Activated T-helper 1 cell treated with anti-CD3 and anti-CD28 coated beads, Interleukin-12 subunit alpha, Interleukin-12 subunit beta, Interleukin-2, Interleukin-4 antibody, amounts not matched to agents 30 ng/mL and 10 ng/mL and 1 ng/mL, durations not matched to agents 14 hours and 24 hours and 36 hours (primary cell): ENCODE measurements at regions of chr10 and their contacts with region 1.

Region 1: DNA sequence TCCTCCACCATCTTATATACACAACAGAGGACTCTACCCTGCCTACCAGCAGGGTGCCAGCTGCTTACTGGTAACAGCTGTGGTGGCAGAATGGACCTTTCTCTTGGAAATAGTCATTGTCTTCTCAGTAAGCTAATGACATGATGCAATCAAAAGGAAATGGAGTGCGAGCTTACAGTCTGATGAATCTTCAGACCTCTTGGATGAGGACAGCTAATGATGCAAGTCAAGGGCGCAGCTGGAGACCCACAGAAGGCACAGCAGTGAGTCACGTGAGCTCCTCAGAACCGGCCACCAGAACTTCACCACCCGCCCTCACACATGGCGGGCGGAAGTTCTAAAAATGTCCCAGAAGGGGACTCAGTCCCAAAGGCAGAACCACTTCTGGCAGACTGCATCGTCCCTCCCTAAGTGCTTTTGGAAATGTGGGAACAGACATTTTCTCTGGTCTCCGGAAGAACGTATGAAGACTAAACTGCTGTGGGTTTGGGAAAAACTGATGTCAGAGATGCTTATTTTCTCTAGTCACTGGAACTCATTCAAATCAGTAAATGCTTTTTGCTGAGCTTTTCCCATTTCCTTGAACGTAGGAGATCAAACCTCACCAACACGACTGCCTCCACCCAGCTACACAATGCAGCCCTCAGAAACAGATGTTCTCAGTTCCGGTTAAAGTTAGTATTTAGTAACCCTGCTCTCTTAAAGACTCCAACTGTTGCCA is 96.4 kb downstream of the FAS start:
- DNase-seq: no peak
- H3K4me3 Mint-ChIP-seq: no peak overlapping the region
- H3K27ac Mint-ChIP-seq: no peak overlapping the region
- H3K4me1 Mint-ChIP-seq: peaks cover 9% of the 10 kb centered on the region
- H3K27me3 Mint-ChIP-seq: peaks cover 15% of the 10 kb centered on the region

Region 2: DNA sequence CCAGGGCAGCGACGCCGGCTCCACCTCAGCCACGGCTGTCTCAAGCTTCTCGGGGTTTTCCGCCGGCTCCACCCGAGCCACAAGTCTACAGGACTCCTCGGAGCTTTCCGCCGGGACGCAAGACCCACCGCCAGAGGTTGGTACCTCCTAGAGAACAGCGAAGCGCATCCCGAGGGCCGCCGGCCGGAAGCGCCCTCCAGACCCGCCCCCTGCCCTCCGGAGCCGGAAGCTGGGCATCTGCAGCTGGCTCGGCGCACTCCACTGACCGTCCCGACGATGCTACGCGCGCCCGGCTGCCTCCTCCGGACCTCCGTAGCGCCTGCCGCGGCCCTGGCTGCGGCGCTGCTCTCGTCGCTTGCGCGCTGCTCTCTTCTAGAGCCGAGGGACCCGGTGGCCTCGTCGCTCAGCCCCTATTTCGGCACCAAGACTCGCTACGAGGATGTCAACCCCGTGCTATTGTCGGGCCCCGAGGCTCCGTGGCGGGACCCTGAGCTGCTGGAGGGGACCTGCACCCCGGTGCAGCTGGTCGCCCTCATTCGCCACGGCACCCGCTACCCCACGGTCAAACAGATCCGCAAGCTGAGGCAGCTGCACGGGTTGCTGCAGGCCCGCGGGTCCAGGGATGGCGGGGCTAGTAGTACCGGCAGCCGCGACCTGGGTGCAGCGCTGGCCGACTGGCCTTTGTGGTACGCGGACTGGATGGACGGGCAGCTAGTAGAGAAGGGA is 1582.2 kb before region 1 on chr10 and contains the start of gene MINPP1:
- intact Hi-C with region 1: loop called (anchors 10 kb)
- DNase-seq: peak; percentile 68
- H3K4me3 Mint-ChIP-seq: peak within 1 kb of the TSS; percentile 90
- H3K27ac Mint-ChIP-seq: peak within 1 kb of the TSS; percentile 86
- H3K4me1 Mint-ChIP-seq: peaks cover 41% of the 10 kb centered on the region
- H3K27me3 Mint-ChIP-seq: peaks cover 14% of the 10 kb centered on the region
- total RNA-seq, gene MINPP1: 12.3 and 13.8 TPM in 2 replicates

Region 3: DNA sequence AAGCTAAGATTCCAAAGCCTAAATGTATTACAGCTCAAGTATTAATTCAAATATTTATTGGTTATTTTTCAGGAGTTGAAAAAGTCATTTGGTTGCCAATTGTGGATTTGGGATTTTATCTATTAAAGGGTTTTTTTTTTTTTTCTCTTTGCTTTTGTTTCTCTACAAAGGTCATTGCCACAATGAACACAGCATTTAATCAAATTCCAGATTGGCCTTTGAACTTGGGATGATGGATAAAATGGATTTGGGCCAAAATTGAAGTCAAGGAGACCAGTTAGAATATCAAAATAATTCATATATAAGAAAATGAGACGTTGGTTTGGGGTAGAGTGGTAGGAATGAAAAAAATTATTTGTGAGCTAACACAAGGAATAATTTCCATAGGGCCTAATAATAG is 317.6 kb before region 1 on chr10:
- intact Hi-C with region 1: no loop called
- DNase-seq: no peak
- H3K4me3 Mint-ChIP-seq: no peak overlapping the region
- H3K27ac Mint-ChIP-seq: no peak overlapping the region
- H3K4me1 Mint-ChIP-seq: no peaks in the 10 kb centered on the region
- H3K27me3 Mint-ChIP-seq: peaks cover 36% of the 10 kb centered on the region

Region 4: DNA sequence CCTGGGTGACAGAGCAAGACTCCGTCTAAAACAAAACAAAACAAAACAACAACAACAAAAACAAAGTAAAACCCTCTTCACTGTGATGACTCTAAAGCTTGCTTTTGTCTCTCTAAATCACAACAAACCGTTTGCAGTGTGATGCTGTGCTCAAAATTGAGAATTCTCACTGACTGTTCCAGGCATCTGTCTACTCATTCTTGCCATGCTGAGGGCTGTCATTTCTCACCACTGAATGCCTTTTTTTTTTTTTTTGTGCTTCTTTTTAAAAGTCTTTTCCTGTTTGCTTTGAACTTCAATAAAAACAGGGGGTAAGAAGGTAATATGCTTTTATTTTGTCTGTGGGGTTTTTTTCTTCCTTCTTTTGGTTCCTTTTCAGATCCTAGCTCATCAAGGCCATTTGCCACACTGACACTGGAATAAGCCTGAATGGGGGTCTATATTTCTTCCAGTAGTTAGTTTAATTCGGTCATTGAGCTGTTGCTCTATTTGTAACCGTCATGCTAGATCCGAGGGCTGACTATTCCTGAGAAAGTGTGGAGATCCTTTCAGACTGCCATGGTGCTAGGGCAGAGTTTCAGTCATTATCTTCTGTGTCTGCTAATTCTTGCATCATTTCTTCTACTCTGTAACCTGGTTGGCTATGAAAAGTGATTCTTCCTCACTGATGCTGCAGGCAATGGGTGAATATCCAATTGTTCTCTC is 85.8 kb before region 1 on chr10:
- intact Hi-C with region 1: loop called (anchors 1 kb)
- DNase-seq: no peak
- H3K4me3 Mint-ChIP-seq: peak overlapping the region; percentile 37
- H3K27ac Mint-ChIP-seq: peak overlapping the region; percentile 81
- H3K4me1 Mint-ChIP-seq: peaks cover 76% of the 10 kb centered on the region
- H3K27me3 Mint-ChIP-seq: no peaks in the 10 kb centered on the region

Region 5: DNA sequence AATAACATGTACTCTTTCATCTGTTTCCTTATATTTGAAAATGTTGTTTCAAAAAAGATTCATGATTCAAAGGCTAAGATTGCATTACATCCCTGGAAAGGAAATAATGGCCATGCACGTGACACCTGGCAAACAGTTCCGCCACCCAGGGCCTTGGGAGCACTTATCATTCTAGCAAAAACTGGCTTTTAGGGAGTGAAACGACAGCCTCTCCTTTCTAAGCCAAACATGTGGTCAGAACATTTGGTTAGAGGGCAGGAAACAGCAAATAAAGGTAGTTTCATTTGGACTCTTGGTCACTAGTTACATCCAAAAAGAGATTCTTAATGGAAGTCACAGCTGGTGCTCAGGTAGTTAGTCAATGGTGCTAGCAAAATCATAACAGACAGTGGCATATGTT is 12.8 kb before region 1 on chr10:
- intact Hi-C with region 1: no loop called
- DNase-seq: no peak
- H3K4me3 Mint-ChIP-seq: no peak overlapping the region
- H3K27ac Mint-ChIP-seq: no peak overlapping the region
- H3K4me1 Mint-ChIP-seq: peaks cover 10% of the 10 kb centered on the region
- H3K27me3 Mint-ChIP-seq: peaks cover 21% of the 10 kb centered on the region

Region 6: GRCh38 chr10:89163265-89163995 is 76.5 kb after region 1 on chr10:
- intact Hi-C with region 1: loop called (anchors 1 kb)
- DNase-seq: peak; percentile 56
- H3K4me3 Mint-ChIP-seq: peak overlapping the region; percentile 57
- H3K27ac Mint-ChIP-seq: peak overlapping the region; percentile 76
- H3K4me1 Mint-ChIP-seq: peaks cover 35% of the 10 kb centered on the region
- H3K27me3 Mint-ChIP-seq: peaks cover 41% of the 10 kb centered on the region

Region 7: GRCh38 chr10:89414146-89414878 is 327.4 kb after region 1 on chr10 and contains the start of gene IFIT5:
- intact Hi-C with region 1: loop called (anchors 1 kb)
- DNase-seq: peak; percentile 65
- H3K4me3 Mint-ChIP-seq: peak within 1 kb of the TSS; percentile 92
- H3K27ac Mint-ChIP-seq: peak within 1 kb of the TSS; percentile 97
- H3K4me1 Mint-ChIP-seq: peaks cover 72% of the 10 kb centered on the region
- H3K27me3 Mint-ChIP-seq: no peaks in the 10 kb centered on the region
- total RNA-seq, gene IFIT5: 8.7 TPM in 2 replicates